ENCODE measurements at regions of chr17 and their contacts with region 1.

Region 1: GRCh38 chr17:16380640-16381495 is at the start of gene UBB:
- DNase-seq: peak; percentile 89 to 99 (median 92)
- ATAC-seq: peak; percentile 95
- H3K4me3 ChIP-seq: peak within 1 kb of the TSS; percentile 87
- H3K4me3 Mint-ChIP-seq: peak within 1 kb of the TSS; percentile 91
- H3K27ac ChIP-seq: peak within 1 kb of the TSS; percentile 94 to 100
- H3K27ac Mint-ChIP-seq: peak within 1 kb of the TSS; percentile 97
- H3K4me1 ChIP-seq: peaks cover 33% of the 10 kb centered on the region
- H3K4me1 Mint-ChIP-seq: peaks cover 46% of the 10 kb centered on the region
- H3K27me3 ChIP-seq: no peaks in the 10 kb centered on the region
- H3K27me3 Mint-ChIP-seq: peaks cover 4% of the 10 kb centered on the region
- CTCF ChIP-seq: no peak
- total RNA-seq, gene UBB: 646 to 647 TPM

Region 2: GRCh38 chr17:16353317-16354174 is 27.3 kb before region 1 on chr17 and contains the start of gene CENPV:
- CTCF ChIA-PET with region 1: interaction called, 3 read pairs
- POLR2A ChIA-PET with region 1: interaction called, 26 read pairs
- intact Hi-C with region 1: loop called in 1 of 2 experiments (anchors 2 kb)
- DNase-seq: peak; percentile 37 to 88 (median 60)
- ATAC-seq: peak; percentile 85
- H3K4me3 ChIP-seq: peak within 1 kb of the TSS; percentile 73
- H3K4me3 Mint-ChIP-seq: peak within 1 kb of the TSS; percentile 97
- H3K27ac ChIP-seq: peak within 1 kb of the TSS in 1 of 2 donors; percentile 30
- H3K27ac Mint-ChIP-seq: peak within 1 kb of the TSS; percentile 72
- H3K4me1 ChIP-seq: peaks cover 19% of the 10 kb centered on the region
- H3K4me1 Mint-ChIP-seq: peaks cover 17% of the 10 kb centered on the region
- H3K27me3 ChIP-seq: no peaks in the 10 kb centered on the region
- H3K27me3 Mint-ChIP-seq: no peaks in the 10 kb centered on the region
- CTCF ChIP-seq: no peak
- total RNA-seq, gene CENPV: 18.5 to 19.4 TPM

Region 3: GRCh38 chr17:16363749-16364536 is 16.9 kb before region 1 on chr17:
- CTCF ChIA-PET with region 1: interaction called, 18 read pairs
- POLR2A ChIA-PET with region 1: interaction called, 17 read pairs
- intact Hi-C with region 1: no loop called
- DNase-seq: peak; percentile 57 to 85 (median 66)
- ATAC-seq: peak; percentile 98
- H3K4me3 ChIP-seq: no peak overlapping the region
- H3K4me3 Mint-ChIP-seq: no peak overlapping the region
- H3K27ac ChIP-seq: no peak overlapping the region
- H3K27ac Mint-ChIP-seq: no peak overlapping the region
- H3K4me1 ChIP-seq: peaks cover 4% of the 10 kb centered on the region
- H3K4me1 Mint-ChIP-seq: no peaks in the 10 kb centered on the region
- H3K27me3 ChIP-seq: no peaks in the 10 kb centered on the region
- H3K27me3 Mint-ChIP-seq: no peaks in the 10 kb centered on the region
- CTCF ChIP-seq: peak; percentile 98

Region 4: GRCh38 chr17:16407911-16408588 is 27.2 kb after region 1 on chr17:
- CTCF ChIA-PET with region 1: no interaction called
- POLR2A ChIA-PET with region 1: interaction called, 4 read pairs
- intact Hi-C with region 1: loop called in 1 of 2 experiments (anchors 1 kb)
- DNase-seq: peak in 1 of 14 experiments; percentile 36
- ATAC-seq: no peak
- H3K4me3 ChIP-seq: no peak overlapping the region
- H3K4me3 Mint-ChIP-seq: peak overlapping the region; percentile 11
- H3K27ac ChIP-seq: no peak overlapping the region
- H3K27ac Mint-ChIP-seq: no peak overlapping the region
- H3K4me1 ChIP-seq: peaks cover 11% of the 10 kb centered on the region
- H3K4me1 Mint-ChIP-seq: no peaks in the 10 kb centered on the region
- H3K27me3 ChIP-seq: peaks cover 0 to 5% of the 10 kb centered on the region in 2 experiments
- H3K27me3 Mint-ChIP-seq: peaks cover 11% of the 10 kb centered on the region
- CTCF ChIP-seq: no peak

Region 5: DNA sequence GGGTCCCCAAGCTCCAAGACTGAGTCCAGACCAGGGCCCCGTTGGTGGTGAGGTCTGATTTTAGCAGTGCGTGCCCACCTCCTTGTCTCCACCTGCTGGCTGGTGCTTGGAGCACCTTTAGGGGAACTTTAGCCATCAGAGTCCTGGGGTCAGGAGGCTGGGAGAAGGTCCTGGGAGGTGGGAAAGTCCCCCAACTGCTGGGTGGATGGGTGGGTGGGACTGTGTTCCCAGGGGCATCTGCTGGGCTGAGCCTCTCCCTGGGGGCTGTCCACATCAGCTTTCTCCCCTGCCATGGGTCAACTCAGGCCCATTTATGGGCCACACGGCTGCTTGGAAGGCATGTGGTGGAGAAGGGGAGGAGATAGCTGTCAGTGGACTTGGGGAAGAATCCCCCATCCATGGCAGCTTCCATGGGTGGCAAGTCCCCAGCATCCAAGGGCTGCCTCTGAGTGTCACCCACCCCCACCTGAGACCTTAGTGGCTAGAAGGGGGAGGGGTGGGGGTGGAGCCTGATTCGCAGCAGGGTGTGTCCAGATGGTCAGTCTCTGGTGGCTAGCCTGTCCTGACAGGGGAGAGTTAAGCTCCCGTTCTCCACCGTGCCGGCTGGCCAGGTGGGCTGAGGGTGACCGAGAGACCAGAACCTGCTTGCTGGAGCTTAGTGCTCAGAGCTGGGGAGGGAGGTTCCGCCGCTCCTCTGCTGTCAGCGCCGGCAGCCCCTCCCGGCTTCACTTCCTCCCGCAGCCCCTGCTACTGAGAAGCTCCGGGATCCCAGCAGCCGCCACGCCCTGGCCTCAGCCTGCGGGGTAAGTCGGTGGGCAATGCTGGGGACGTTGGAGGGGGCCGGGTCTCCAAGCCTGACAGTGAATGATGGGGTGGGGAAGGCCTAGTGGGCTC is 34.4 kb after region 1 on chr17 and contains the start of gene TRPV2:
- CTCF ChIA-PET with region 1: interaction called, 5 read pairs
- POLR2A ChIA-PET with region 1: interaction called, 56 read pairs
- intact Hi-C with region 1: loop called (anchors 1 kb)
- DNase-seq: peak; percentile 21 to 72 (median 45)
- ATAC-seq: peak; percentile 49
- H3K4me3 ChIP-seq: peak within 1 kb of the TSS; percentile 96
- H3K4me3 Mint-ChIP-seq: peak within 1 kb of the TSS; percentile 95
- H3K27ac ChIP-seq: peak within 1 kb of the TSS; percentile 90 to 96
- H3K27ac Mint-ChIP-seq: peak within 1 kb of the TSS; percentile 100
- H3K4me1 ChIP-seq: peaks cover 56% of the 10 kb centered on the region
- H3K4me1 Mint-ChIP-seq: peaks cover 47% of the 10 kb centered on the region
- H3K27me3 ChIP-seq: no peaks in the 10 kb centered on the region
- H3K27me3 Mint-ChIP-seq: no peaks in the 10 kb centered on the region
- CTCF ChIP-seq: peak; percentile 55
- total RNA-seq, gene TRPV2: 42.8 to 45.2 TPM

Region 6: GRCh38 chr17:16484445-16485175 is 103.7 kb after region 1 on chr17:
- CTCF ChIA-PET with region 1: no interaction called
- POLR2A ChIA-PET with region 1: no interaction called
- intact Hi-C with region 1: no loop called
- DNase-seq: no peak
- ATAC-seq: no peak
- H3K4me3 ChIP-seq: no peak overlapping the region
- H3K4me3 Mint-ChIP-seq: no peak overlapping the region
- H3K27ac ChIP-seq: no peak overlapping the region
- H3K27ac Mint-ChIP-seq: no peak overlapping the region
- H3K4me1 ChIP-seq: peaks cover 2% of the 10 kb centered on the region
- H3K4me1 Mint-ChIP-seq: no peaks in the 10 kb centered on the region
- H3K27me3 ChIP-seq: no peaks in the 10 kb centered on the region
- H3K27me3 Mint-ChIP-seq: no peaks in the 10 kb centered on the region
- CTCF ChIP-seq: no peak

Region 7: DNA sequence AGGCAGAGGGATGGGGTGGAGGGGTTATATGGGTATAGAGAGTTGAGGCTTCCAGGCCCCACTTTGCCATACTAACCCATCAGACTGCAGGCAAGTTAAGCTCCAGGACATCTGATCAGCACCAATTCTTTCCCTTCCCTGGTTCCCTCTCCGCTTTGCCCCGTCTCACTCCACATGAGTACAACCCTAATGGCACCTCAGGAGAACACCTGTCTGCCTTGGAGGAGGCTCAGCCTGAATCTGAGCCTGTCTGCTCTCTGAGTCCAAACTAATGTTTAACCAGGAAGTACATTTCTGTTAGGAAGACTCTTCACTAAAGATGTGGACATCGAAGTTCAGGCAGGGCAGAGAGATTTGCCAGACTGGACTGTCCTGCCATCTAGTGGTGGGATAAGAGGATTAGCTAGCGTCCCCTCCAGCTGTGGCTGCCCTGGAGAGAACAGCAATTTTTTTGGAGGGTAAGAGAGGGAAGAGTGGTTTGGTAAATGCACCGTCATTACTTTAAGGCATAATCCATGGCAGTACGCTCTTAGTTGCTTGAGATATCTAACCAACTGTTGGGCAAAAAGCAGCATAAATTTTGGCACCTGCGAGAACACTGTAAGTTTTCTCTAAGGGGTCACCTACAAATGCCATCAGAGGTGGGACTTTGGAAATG is 140.3 kb after region 1 on chr17:
- CTCF ChIA-PET with region 1: no interaction called
- POLR2A ChIA-PET with region 1: interaction called, 8 read pairs
- intact Hi-C with region 1: loop called (anchors 1 kb)
- DNase-seq: peak; percentile 37 to 86 (median 48)
- ATAC-seq: peak; percentile 86
- H3K4me3 ChIP-seq: no peak overlapping the region
- H3K4me3 Mint-ChIP-seq: no peak overlapping the region
- H3K27ac ChIP-seq: no peak overlapping the region
- H3K27ac Mint-ChIP-seq: no peak overlapping the region
- H3K4me1 ChIP-seq: peaks cover 6% of the 10 kb centered on the region
- H3K4me1 Mint-ChIP-seq: peaks cover 3% of the 10 kb centered on the region
- H3K27me3 ChIP-seq: peaks cover 3 to 8% of the 10 kb centered on the region in 2 experiments
- H3K27me3 Mint-ChIP-seq: peaks cover 50% of the 10 kb centered on the region
- CTCF ChIP-seq: peak; percentile 86

Region 8: DNA sequence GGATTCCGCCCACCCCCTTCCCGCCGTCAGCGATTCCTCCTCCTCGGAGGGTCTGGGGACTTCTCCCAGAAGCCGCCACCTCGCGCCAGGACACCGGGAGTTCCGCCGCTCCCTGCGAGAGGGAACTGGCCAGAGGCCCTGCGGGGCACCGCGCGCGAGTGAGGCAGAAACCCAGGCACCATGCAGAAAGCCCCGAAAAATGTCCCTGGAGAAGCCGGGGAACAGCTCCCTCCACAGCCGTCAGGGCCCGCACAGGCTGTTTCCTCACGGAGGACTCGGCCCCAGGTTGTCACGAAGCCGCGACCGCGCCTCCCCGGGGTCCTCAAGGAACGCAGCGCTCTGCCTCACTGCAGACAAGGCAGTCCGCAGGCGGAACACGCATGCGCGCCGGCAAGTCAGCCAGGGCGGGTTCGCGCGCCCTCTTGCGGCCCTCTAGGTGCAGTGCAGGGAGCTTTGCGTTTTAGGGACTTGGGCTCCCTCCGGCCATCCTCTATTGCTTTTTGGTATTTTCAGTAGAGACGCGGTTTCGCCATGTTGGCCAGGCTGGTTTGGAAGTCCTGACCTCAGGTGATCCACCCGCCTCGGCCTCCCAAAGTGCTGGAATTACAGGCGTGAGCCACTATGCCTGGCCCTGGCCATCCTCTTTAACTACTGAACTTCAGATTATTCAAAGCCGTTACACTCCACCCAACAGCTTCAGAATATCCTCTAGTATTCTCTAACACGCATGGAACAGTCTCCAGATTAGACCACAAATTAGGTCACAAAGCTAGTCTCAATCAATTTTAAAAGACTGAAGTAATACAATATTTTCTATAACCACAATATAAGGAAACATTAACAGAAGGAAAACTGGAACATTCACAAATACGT is 208.5 kb after region 1 on chr17:
- CTCF ChIA-PET with region 1: no interaction called
- POLR2A ChIA-PET with region 1: interaction called, 4 read pairs
- intact Hi-C with region 1: loop called in 1 of 2 experiments (anchors 5 kb)
- DNase-seq: peak; percentile 85 to 96 (median 92)
- ATAC-seq: peak; percentile 93
- H3K4me3 ChIP-seq: peak overlapping the region; percentile 63
- H3K4me3 Mint-ChIP-seq: peak overlapping the region; percentile 87
- H3K27ac ChIP-seq: no peak overlapping the region
- H3K27ac Mint-ChIP-seq: no peak overlapping the region
- H3K4me1 ChIP-seq: peaks cover 16% of the 10 kb centered on the region
- H3K4me1 Mint-ChIP-seq: peaks cover 4% of the 10 kb centered on the region
- H3K27me3 ChIP-seq: peaks cover 0 to 7% of the 10 kb centered on the region in 2 experiments
- H3K27me3 Mint-ChIP-seq: peaks cover 61% of the 10 kb centered on the region
- CTCF ChIP-seq: peak; percentile 99

Measured in CD4-positive, alpha-beta T cell (primary cell).